Endothelial cell of umbilical vein (primary cell): ENCODE measurements at regions of chr9 and their contacts with region 1.

Region 1: GRCh38 chr9:36450110-36450732 is 50.2 kb upstream of the RNF38 start:
- DNase-seq: peak; percentile 50
- H3K4me3 ChIP-seq: no peak overlapping the region
- H3K27ac ChIP-seq: no peak overlapping the region
- H3K4me1 ChIP-seq: no peaks in the 10 kb centered on the region
- H3K27me3 ChIP-seq: no peaks in the 10 kb centered on the region
- CTCF ChIP-seq: peak; percentile 51 to 58
- POLR2A ChIP-seq: no peak

Region 2: DNA sequence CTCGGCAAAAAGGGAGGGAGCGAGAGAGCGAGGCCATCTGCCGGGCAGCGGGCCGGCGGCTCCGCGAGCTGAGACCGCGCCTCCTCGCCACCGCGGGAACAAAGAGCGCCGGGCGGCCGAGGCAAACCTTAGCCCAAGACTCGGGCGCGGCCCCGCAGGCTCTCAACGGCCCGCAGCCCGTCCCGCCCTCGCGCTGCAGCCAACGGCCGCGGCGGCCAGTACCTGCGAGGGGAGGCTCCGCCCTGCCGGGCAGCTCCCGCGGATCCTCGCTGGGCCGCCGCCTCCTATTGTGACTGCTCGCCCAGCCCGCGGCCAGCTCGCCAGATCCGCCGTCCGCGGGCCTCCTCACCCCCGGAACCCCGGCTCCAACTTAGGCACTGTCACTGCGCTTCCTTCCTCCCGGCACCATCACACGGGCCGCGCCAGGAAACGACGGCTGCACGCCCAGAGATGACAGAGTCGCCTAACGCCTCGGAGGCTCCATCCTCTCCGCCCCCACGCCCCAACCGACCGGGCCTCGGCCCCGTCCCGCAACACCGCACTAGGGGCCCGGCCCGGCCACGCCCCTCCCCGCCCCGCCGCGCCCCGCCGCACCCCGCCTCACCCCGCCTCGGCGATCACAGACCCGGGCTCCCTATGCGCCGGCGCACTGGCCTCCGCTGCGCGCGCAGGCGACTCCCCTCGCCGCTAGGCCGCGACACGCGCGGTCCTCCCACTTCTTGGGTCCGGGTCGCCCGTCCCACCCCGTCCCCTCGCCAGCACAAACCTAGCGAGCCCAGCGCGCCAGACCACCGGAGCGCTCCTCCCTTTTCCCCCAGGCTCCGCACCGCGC is 49.7 kb before region 1 on chr9:
- CTCF ChIA-PET with region 1: interaction called, 219 read pairs
- POLR2A ChIA-PET with region 1: no interaction called
- dilution Hi-C with region 1: no loop called
- intact Hi-C with region 1: no loop called
- DNase-seq: peak; percentile 82
- H3K4me3 ChIP-seq: peak overlapping the region; percentile 92 to 97 (median 95)
- H3K27ac ChIP-seq: peak overlapping the region; percentile 88
- H3K4me1 ChIP-seq: peaks cover 14% of the 10 kb centered on the region
- H3K27me3 ChIP-seq: no peaks in the 10 kb centered on the region
- CTCF ChIP-seq: peak in 1 of 2 donors; percentile 8
- POLR2A ChIP-seq: peak; percentile 77

Region 3: DNA sequence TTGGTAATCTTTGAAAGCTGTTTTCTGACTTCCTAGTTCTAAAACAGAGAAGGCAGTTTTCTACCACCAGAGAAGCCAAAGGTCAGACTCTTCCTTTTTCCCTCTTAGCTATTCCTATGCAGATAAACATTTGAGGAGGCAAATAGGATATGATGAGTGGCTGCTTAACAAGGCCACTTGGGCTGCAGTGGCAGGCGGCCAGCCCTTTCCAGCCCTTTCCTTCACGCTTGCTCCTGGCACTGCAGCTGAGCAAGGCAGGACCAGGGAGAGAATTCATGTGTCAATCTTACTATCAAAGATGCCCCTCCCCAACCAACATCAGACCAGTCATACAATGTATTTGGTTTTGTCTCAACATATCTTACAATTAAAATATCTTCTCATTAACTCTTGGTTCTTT is 13.3 kb before region 1 on chr9:
- CTCF ChIA-PET with region 1: interaction called, 30 read pairs
- POLR2A ChIA-PET with region 1: interaction called, 12 read pairs
- dilution Hi-C with region 1: no loop called
- intact Hi-C with region 1: no loop called
- DNase-seq: peak; percentile 40
- H3K4me3 ChIP-seq: no peak overlapping the region
- H3K27ac ChIP-seq: no peak overlapping the region
- H3K4me1 ChIP-seq: peaks cover under 1% of the 10 kb centered on the region
- H3K27me3 ChIP-seq: no peaks in the 10 kb centered on the region
- CTCF ChIP-seq: no peak
- POLR2A ChIP-seq: no peak

Region 4: DNA sequence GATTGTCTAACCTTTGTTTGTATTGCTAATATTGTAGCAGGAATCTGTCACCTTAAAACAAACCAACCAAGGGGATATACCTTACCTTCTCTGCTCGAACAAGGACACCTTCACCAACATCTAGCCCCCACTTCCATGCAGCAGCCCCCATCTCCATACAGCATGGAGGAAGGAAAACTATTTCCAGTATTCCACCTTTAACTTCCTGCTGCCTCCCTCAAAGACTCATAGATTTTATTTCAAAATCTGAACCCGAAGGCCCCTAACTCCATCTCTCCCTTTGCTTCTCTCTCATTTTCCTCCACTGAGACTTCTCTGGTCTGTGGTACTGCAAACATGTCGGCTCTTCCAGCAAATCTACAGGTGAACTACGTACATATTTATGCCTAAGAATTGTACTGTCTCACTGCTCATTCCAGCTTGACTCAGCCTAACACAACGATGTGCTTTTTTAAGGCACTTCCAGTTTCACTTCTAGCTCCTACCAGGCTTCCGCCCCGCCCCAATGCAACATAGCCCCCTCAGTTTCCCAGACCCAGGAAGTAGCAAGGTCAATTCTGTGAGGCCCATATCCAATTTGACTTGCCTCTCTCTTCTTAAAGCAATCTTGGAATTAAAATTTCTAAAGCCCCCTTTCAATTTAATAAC is 20.5 kb after region 1 on chr9:
- CTCF ChIA-PET with region 1: interaction called, 11 read pairs
- POLR2A ChIA-PET with region 1: no interaction called
- dilution Hi-C with region 1: no loop called
- intact Hi-C with region 1: no loop called
- DNase-seq: peak; percentile 65
- H3K4me3 ChIP-seq: peak overlapping the region in 2 of 3 experiments; percentile 23 to 56
- H3K27ac ChIP-seq: peak overlapping the region; percentile 15
- H3K4me1 ChIP-seq: peaks cover 15% of the 10 kb centered on the region
- H3K27me3 ChIP-seq: no peaks in the 10 kb centered on the region
- CTCF ChIP-seq: no peak
- POLR2A ChIP-seq: no peak

Region 5: GRCh38 chr9:36551129-36551528 is 100.9 kb after region 1 on chr9:
- CTCF ChIA-PET with region 1: interaction called, 27 read pairs
- POLR2A ChIA-PET with region 1: no interaction called
- dilution Hi-C with region 1: no loop called
- intact Hi-C with region 1: loop called (anchors 1 kb)
- DNase-seq: no peak
- H3K4me3 ChIP-seq: no peak overlapping the region
- H3K27ac ChIP-seq: no peak overlapping the region
- H3K4me1 ChIP-seq: no peaks in the 10 kb centered on the region
- H3K27me3 ChIP-seq: peaks cover 10% of the 10 kb centered on the region in 2 experiments
- CTCF ChIP-seq: no peak
- POLR2A ChIP-seq: no peak